WTC11 (cell line): ENCODE measurements at regions of chr6 and their contacts with region 1.

Region 1: DNA sequence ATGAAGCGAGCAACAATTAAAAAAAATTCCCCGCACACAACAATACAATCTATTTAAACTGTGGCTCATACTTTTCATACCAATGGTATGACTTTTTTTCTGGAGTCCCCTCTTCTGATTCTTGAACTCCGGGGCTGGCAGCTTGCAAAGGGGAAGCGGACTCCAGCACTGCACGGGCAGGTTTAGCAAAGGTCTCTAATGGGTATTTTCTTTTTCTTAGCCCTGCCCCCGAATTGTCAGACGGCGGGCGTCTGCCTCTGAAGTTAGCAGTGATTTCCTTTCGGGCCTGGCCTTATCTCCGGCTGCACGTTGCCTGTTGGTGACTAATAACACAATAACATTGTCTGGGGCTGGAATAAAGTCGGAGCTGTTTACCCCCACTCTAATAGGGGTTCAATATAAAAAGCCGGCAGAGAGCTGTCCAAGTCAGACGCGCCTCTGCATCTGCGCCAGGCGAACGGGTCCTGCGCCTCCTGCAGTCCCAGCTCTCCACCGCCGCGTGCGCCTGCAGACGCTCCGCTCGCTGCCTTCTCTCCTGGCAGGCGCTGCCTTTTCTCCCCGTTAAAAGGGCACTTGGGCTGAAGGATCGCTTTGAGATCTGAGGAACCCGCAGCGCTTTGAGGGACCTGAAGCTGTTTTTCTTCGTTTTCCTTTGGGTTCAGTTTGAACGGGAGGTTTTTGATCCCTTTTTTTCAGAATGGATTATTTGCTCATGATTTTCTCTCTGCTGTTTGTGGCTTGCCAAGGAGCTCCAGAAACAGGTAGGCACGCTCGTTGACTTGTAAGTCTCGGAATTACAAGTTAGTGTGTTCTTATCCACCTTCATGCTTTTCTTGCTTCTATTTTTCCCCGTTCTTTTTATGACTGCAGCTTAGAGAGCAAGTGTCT is at the start of gene EDN1:
- DNase-seq: peak; percentile 84
- ATAC-seq: peak; percentile 80
- H3K4me3 Mint-ChIP-seq: peak within 1 kb of the TSS; percentile 81
- H3K27ac Mint-ChIP-seq: no peak within 1 kb of the TSS
- H3K4me1 Mint-ChIP-seq: peaks cover 48% of the 10 kb centered on the region
- H3K27me3 Mint-ChIP-seq: peaks cover 26% of the 10 kb centered on the region
- CTCF ChIP-seq: no peak; the same call in 1 of the 2 replicates
- total RNA-seq, gene EDN1: 0.50 to 1.0 TPM (median 0.80 TPM) in 3 replicates

Region 2: DNA sequence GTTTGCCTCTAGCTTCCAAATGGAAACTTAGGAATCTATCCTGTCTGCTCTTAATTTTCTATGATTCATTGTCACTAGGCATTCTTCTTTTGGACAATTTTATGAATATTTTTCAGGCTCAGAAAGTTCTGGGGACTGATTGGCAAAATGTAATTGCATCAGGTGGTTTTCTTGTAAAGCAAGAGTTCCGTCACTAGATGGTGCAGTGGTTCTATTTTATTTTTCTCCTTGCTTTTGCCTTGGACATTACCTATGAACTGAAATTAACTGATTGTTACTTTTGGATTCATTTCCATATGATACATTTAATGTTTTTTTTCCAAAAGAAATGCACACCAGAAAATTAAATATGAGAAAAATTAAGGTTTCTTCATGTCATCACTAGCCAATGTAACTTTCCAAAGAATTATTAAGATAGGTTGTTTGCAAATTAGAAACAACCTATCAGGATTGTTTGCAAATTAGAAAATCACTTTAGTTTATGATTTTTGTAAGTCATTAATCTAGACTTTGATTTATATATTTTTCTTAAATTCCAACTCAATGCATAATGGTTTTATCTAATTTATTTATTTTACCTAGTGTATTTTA is 704.7 kb before region 1 on chr6:
- CTCF ChIA-PET with region 1: interaction called, 15 read pairs
- POLR2A ChIA-PET with region 1: interaction called, 4 read pairs
- DNase-seq: no peak
- ATAC-seq: no peak; the same call in 1 of the 2 replicates
- H3K4me3 Mint-ChIP-seq: no peak overlapping the region
- H3K27ac Mint-ChIP-seq: no peak overlapping the region
- H3K4me1 Mint-ChIP-seq: peaks cover 25% of the 10 kb centered on the region
- H3K27me3 Mint-ChIP-seq: no peaks in the 10 kb centered on the region
- CTCF ChIP-seq: no peak; the same call in 1 of the 2 replicates

Region 3: GRCh38 chr6:11650011-11650696 is 640.0 kb before region 1 on chr6:
- CTCF ChIA-PET with region 1: interaction called, 25 read pairs
- POLR2A ChIA-PET with region 1: no interaction called
- DNase-seq: peak; percentile 71
- ATAC-seq: peak; percentile 91
- H3K4me3 Mint-ChIP-seq: peak overlapping the region; percentile 10; the same call in 1 of the 2 replicates
- H3K27ac Mint-ChIP-seq: peak overlapping the region; percentile 98
- H3K4me1 Mint-ChIP-seq: peaks cover 67% of the 10 kb centered on the region
- H3K27me3 Mint-ChIP-seq: no peaks in the 10 kb centered on the region
- CTCF ChIP-seq: no peak

Region 4: GRCh38 chr6:12327391-12327790 is 37.2 kb after region 1 on chr6:
- CTCF ChIA-PET with region 1: interaction called, 10 read pairs
- POLR2A ChIA-PET with region 1: no interaction called
- DNase-seq: no peak
- ATAC-seq: no peak
- H3K4me3 Mint-ChIP-seq: no peak overlapping the region
- H3K27ac Mint-ChIP-seq: no peak overlapping the region
- H3K4me1 Mint-ChIP-seq: peaks cover 54% of the 10 kb centered on the region
- H3K27me3 Mint-ChIP-seq: peaks cover 10% of the 10 kb centered on the region
- CTCF ChIP-seq: no peak

Region 5: GRCh38 chr6:12483712-12484111 is 193.5 kb after region 1 on chr6:
- CTCF ChIA-PET with region 1: interaction called, 38 read pairs
- POLR2A ChIA-PET with region 1: no interaction called
- DNase-seq: no peak
- ATAC-seq: no peak
- H3K4me3 Mint-ChIP-seq: no peak overlapping the region
- H3K27ac Mint-ChIP-seq: no peak overlapping the region
- H3K4me1 Mint-ChIP-seq: peaks cover 16% of the 10 kb centered on the region
- H3K27me3 Mint-ChIP-seq: no peaks in the 10 kb centered on the region
- CTCF ChIP-seq: no peak

Region 6: GRCh38 chr6:12504319-12504966 is 214.3 kb after region 1 on chr6:
- CTCF ChIA-PET with region 1: interaction called, 35 read pairs
- POLR2A ChIA-PET with region 1: no interaction called
- DNase-seq: peak; percentile 33
- ATAC-seq: peak; percentile 99
- H3K4me3 Mint-ChIP-seq: no peak overlapping the region
- H3K27ac Mint-ChIP-seq: no peak overlapping the region
- H3K4me1 Mint-ChIP-seq: peaks cover 4% of the 10 kb centered on the region
- H3K27me3 Mint-ChIP-seq: no peaks in the 10 kb centered on the region
- CTCF ChIP-seq: peak; percentile 65

Region 7: GRCh38 chr6:12605888-12606345 is 315.7 kb after region 1 on chr6:
- CTCF ChIA-PET with region 1: interaction called, 66 read pairs
- POLR2A ChIA-PET with region 1: no interaction called
- DNase-seq: peak; percentile 48
- ATAC-seq: peak; percentile 92
- H3K4me3 Mint-ChIP-seq: no peak overlapping the region
- H3K27ac Mint-ChIP-seq: no peak overlapping the region
- H3K4me1 Mint-ChIP-seq: peaks cover 25% of the 10 kb centered on the region
- H3K27me3 Mint-ChIP-seq: no peaks in the 10 kb centered on the region
- CTCF ChIP-seq: peak; percentile 56